ENCODE measurements at regions of chr3 and their contacts with region 1.

Region 1: GRCh38 chr3:47380601-47381316 is at the start of gene PTPN23:
- DNase-seq: peak; percentile 98 to 99 (median 98)
- H3K4me3 ChIP-seq: peak within 1 kb of the TSS; percentile 88 to 97
- H3K4me3 Mint-ChIP-seq: peak within 1 kb of the TSS; percentile 99
- H3K27ac ChIP-seq: peak within 1 kb of the TSS; percentile 90
- H3K27ac Mint-ChIP-seq: peak within 1 kb of the TSS; percentile 95 to 100 (median 100)
- H3K4me1 ChIP-seq: peaks cover 43% of the 10 kb centered on the region
- H3K4me1 Mint-ChIP-seq: peaks cover 26 to 59% (median 40%) of the 10 kb centered on the region in 4 donors
- H3K27me3 ChIP-seq: no peaks in the 10 kb centered on the region
- H3K27me3 Mint-ChIP-seq: no peaks in the 10 kb centered on the region
- total RNA-seq, gene PTPN23: 50.0 to 53.9 TPM

Region 2: DNA sequence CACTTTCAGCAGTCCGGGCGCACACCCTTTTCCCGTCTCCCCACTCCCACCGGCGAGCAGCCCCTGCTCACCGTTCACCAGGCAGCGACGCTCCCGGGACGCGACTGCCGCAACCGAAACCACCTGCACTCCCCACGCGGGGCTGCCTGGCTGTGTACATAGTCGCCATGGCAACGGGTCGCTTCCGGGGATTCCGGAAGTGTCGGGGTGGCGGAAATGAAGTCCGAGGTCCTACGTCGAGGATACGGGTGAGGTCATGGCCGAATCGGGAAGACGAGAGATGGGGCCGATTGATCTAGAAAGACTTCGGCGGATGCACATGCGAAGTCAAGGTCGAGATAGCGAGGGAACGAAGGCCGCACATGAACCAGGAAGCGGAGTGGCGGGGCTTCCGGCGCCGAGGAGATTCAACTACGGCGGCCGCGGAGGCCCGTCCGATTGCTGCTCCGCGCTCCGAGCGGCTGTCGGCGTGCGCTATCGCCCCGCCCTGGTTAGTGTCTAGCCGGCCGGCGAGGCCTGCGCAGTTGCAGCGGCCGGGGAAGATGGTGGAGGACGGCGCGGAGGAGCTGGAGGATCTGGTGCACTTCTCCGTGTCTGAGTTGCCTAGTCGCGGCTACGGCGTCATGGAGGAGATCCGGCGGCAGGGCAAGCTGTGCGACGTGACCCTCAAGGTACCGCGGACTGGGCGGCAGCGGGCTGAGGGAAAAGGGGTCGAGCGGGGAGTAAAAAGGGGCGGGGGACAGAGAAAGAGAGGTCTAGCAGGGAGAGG is 98.2 kb before region 1 on chr3 and contains the starts of genes KIF9 and KLHL18:
- CTCF ChIA-PET with region 1: no interaction called
- POLR2A ChIA-PET with region 1: interaction called, 9 read pairs
- intact Hi-C with region 1: loop called (anchors 1 kb)
- DNase-seq: peak; percentile 97 to 98 (median 98)
- H3K4me3 ChIP-seq: peak within 1 kb of the TSS; percentile 94 to 99
- H3K4me3 Mint-ChIP-seq: peak within 1 kb of the TSS; percentile 95 to 100 (median 98)
- H3K27ac ChIP-seq: peak within 1 kb of the TSS; percentile 95
- H3K27ac Mint-ChIP-seq: peak within 1 kb of the TSS; percentile 98 to 100 (median 100)
- H3K4me1 ChIP-seq: peaks cover 40% of the 10 kb centered on the region
- H3K4me1 Mint-ChIP-seq: peaks cover 19 to 54% (median 38%) of the 10 kb centered on the region in 4 donors
- H3K27me3 ChIP-seq: no peaks in the 10 kb centered on the region
- H3K27me3 Mint-ChIP-seq: no peaks in the 10 kb centered on the region
- total RNA-seq, gene KIF9: 2.3 to 3.2 TPM
- total RNA-seq, gene KLHL18: 21.8 to 26.7 TPM

Region 3: GRCh38 chr3:47313341-47314055 is 67.3 kb before region 1 on chr3:
- CTCF ChIA-PET with region 1: no interaction called
- POLR2A ChIA-PET with region 1: no interaction called
- intact Hi-C with region 1: no loop called
- DNase-seq: no peak
- H3K4me3 ChIP-seq: no peak overlapping the region
- H3K4me3 Mint-ChIP-seq: no peak overlapping the region
- H3K27ac ChIP-seq: no peak overlapping the region
- H3K27ac Mint-ChIP-seq: peak overlapping the region in 1 of 7 donors; percentile 60
- H3K4me1 ChIP-seq: no peaks in the 10 kb centered on the region
- H3K4me1 Mint-ChIP-seq: peaks cover 6 to 21% (median 13%) of the 10 kb centered on the region in 4 donors
- H3K27me3 ChIP-seq: no peaks in the 10 kb centered on the region
- H3K27me3 Mint-ChIP-seq: no peaks in the 10 kb centered on the region

Region 4: GRCh38 chr3:47420511-47421484 is 40.0 kb after region 1 on chr3:
- CTCF ChIA-PET with region 1: interaction called, 7 read pairs
- POLR2A ChIA-PET with region 1: interaction called, 3 read pairs
- intact Hi-C with region 1: loop called (anchors 2 kb)
- DNase-seq: peak; percentile 86 to 91 (median 87)
- H3K4me3 ChIP-seq: peak overlapping the region in 1 of 2 donors; percentile 4
- H3K4me3 Mint-ChIP-seq: peak overlapping the region; percentile 69 to 89 (median 78)
- H3K27ac ChIP-seq: peak overlapping the region; percentile 69
- H3K27ac Mint-ChIP-seq: peak overlapping the region; percentile 98 to 99 (median 99)
- H3K4me1 ChIP-seq: peaks cover 18% of the 10 kb centered on the region
- H3K4me1 Mint-ChIP-seq: peaks cover 8 to 21% (median 12%) of the 10 kb centered on the region in 4 donors
- H3K27me3 ChIP-seq: no peaks in the 10 kb centered on the region
- H3K27me3 Mint-ChIP-seq: no peaks in the 10 kb centered on the region

Region 5: DNA sequence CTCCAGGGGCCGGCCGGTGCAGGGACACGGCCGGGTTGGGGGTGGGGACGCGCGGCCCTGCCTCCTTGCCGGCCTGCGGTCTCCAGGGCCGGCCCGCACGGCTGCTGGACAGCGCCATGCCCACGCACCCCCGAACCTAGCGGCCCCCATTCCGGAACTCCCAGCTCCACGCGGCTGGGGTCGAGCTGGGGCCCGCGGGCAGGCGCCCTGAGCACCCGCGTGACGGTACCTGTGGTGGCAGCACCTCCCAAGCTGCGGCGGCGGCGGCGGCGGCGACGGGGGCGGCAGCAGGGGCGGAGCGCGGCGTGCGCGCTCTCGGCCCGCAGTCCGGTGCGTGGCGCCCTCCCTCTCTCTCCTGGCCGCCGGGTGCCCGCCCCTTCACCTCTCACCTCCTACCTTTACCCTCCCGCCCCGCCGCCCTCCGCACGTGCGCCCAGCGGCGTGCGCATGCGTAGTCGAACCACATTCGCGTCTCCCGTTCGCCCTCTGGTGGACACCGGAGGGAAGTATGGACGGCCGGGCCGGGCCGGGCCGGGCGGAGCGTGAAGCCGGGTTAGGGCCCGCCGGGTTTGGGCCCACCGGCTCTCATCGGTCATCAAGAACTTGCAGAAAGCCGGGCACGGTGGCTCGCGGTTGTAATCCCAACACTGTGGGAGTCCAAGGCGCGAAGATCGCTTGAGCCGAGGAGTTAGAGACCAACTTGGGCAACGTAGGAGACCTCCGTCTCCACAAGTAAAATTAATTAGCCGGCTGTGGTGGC is 95.0 kb after region 1 on chr3 and contains the start of gene SCAP:
- CTCF ChIA-PET with region 1: interaction called, 5 read pairs
- POLR2A ChIA-PET with region 1: interaction called, 6 read pairs
- intact Hi-C with region 1: loop called (anchors 1 kb)
- DNase-seq: peak; percentile 94 to 95 (median 95)
- H3K4me3 ChIP-seq: peak within 1 kb of the TSS; percentile 43 to 61
- H3K4me3 Mint-ChIP-seq: peak within 1 kb of the TSS; percentile 84 to 97 (median 92)
- H3K27ac ChIP-seq: peak within 1 kb of the TSS; percentile 72
- H3K27ac Mint-ChIP-seq: peak within 1 kb of the TSS; percentile 84 to 94 (median 93)
- H3K4me1 ChIP-seq: peaks cover 26% of the 10 kb centered on the region
- H3K4me1 Mint-ChIP-seq: peaks cover 25 to 48% (median 36%) of the 10 kb centered on the region in 4 donors
- H3K27me3 ChIP-seq: no peaks in the 10 kb centered on the region
- H3K27me3 Mint-ChIP-seq: no peaks in the 10 kb centered on the region
- total RNA-seq, gene SCAP: 85.7 to 88.1 TPM

Region 6: DNA sequence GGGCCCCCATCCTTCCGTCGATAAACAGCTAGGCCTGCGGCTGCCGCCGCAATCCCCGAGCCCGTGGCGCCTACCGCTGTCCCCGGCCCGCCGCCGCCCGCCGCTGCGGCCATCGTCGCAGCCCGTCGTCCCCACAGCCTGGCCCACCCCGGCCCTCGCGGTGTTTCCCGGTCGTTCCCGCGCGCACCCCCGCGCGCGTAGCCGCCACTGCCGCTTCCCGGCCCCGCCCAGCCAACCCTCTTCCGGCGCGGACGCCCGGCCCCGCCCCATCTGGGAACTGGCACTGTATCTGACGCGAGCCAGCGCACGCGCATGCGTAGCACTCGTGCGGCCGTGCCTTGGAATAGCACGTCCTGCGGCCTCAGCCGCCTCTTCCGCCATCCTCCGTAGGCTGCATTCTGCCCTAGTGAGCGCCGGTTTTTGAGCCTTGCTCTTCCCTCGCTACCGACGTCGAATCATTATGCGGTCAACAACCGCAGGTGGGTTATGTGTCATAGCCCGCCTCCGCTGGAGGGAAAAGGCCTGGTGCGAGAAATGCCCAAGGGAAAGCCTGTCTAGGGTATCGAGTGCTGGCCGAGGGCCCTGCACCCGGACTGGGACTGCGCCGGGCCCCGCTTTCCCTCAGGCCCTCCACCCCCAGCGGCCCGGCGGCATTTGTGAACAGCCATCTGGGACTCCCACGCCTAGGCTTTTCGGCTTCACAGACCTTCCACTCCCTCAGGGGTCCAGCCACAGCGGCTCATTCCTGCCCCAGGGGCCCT is 401.1 kb after region 1 on chr3 and contains the start of gene SMARCC1:
- CTCF ChIA-PET with region 1: no interaction called
- POLR2A ChIA-PET with region 1: no interaction called
- intact Hi-C with region 1: loop called (anchors 2 kb)
- DNase-seq: peak; percentile 95 to 98 (median 98)
- H3K4me3 ChIP-seq: peak within 1 kb of the TSS; percentile 71 to 91
- H3K4me3 Mint-ChIP-seq: peak within 1 kb of the TSS; percentile 92 to 97 (median 94)
- H3K27ac ChIP-seq: peak within 1 kb of the TSS; percentile 96
- H3K27ac Mint-ChIP-seq: peak within 1 kb of the TSS; percentile 95 to 99 (median 99)
- H3K4me1 ChIP-seq: peaks cover 39% of the 10 kb centered on the region
- H3K4me1 Mint-ChIP-seq: peaks cover 16 to 33% (median 21%) of the 10 kb centered on the region in 4 donors
- H3K27me3 ChIP-seq: no peaks in the 10 kb centered on the region
- H3K27me3 Mint-ChIP-seq: no peaks in the 10 kb centered on the region
- total RNA-seq, gene SMARCC1: 85.7 to 101 TPM

Region 7: GRCh38 chr3:47802734-47803477 is 422.1 kb after region 1 on chr3 and contains the start of gene DHX30:
- CTCF ChIA-PET with region 1: no interaction called
- POLR2A ChIA-PET with region 1: interaction called, 4 read pairs
- intact Hi-C with region 1: loop called (anchors 2 kb)
- DNase-seq: peak; percentile 81 to 90 (median 84)
- H3K4me3 ChIP-seq: peak within 1 kb of the TSS; percentile 95 to 97
- H3K4me3 Mint-ChIP-seq: peak within 1 kb of the TSS; percentile 93 to 97 (median 95)
- H3K27ac ChIP-seq: peak within 1 kb of the TSS; percentile 90
- H3K27ac Mint-ChIP-seq: peak within 1 kb of the TSS; percentile 91 to 98 (median 97)
- H3K4me1 ChIP-seq: peaks cover 27% of the 10 kb centered on the region
- H3K4me1 Mint-ChIP-seq: peaks cover 15 to 27% (median 22%) of the 10 kb centered on the region in 4 donors
- H3K27me3 ChIP-seq: no peaks in the 10 kb centered on the region
- H3K27me3 Mint-ChIP-seq: no peaks in the 10 kb centered on the region
- total RNA-seq, gene DHX30: 86.5 to 93.0 TPM

Region 8: GRCh38 chr3:48208076-48208475 is 827.3 kb after region 1 on chr3:
- CTCF ChIA-PET with region 1: no interaction called
- POLR2A ChIA-PET with region 1: no interaction called
- intact Hi-C with region 1: no loop called
- DNase-seq: no peak
- H3K4me3 ChIP-seq: no peak overlapping the region
- H3K4me3 Mint-ChIP-seq: no peak overlapping the region
- H3K27ac ChIP-seq: no peak overlapping the region
- H3K27ac Mint-ChIP-seq: no peak overlapping the region
- H3K4me1 ChIP-seq: no peaks in the 10 kb centered on the region
- H3K4me1 Mint-ChIP-seq: peaks cover 0 to 4% (median 0%) of the 10 kb centered on the region in 4 donors
- H3K27me3 ChIP-seq: no peaks in the 10 kb centered on the region
- H3K27me3 Mint-ChIP-seq: peaks cover 0 to 2% of the 10 kb centered on the region in 2 donors